K562 (cell line): ENCODE measurements at regions of chr7 and their contacts with region 1.

Region 1: GRCh38 chr7:85023045-85023712 is 163.7 kb downstream of the SEMA3D start:
- DNase-seq: peak; percentile 31 to 61 (median 38)
- ATAC-seq: no peak; the same call in 2 of the 3 replicates
- H3K4me3 ChIP-seq: no peak overlapping the region
- H3K27ac ChIP-seq: no peak overlapping the region
- H3K4me1 ChIP-seq: no peaks in the 10 kb centered on the region
- H3K27me3 ChIP-seq: no peaks in the 10 kb centered on the region
- CTCF ChIP-seq: peak; percentile 37 to 80 (median 57); a peak in 4 of 6 replicates
- EP300 ChIP-seq: no peak
- POLR2A ChIP-seq: no peak
- RAD21 ChIP-seq: peak; percentile 95 to 96

Region 2: DNA sequence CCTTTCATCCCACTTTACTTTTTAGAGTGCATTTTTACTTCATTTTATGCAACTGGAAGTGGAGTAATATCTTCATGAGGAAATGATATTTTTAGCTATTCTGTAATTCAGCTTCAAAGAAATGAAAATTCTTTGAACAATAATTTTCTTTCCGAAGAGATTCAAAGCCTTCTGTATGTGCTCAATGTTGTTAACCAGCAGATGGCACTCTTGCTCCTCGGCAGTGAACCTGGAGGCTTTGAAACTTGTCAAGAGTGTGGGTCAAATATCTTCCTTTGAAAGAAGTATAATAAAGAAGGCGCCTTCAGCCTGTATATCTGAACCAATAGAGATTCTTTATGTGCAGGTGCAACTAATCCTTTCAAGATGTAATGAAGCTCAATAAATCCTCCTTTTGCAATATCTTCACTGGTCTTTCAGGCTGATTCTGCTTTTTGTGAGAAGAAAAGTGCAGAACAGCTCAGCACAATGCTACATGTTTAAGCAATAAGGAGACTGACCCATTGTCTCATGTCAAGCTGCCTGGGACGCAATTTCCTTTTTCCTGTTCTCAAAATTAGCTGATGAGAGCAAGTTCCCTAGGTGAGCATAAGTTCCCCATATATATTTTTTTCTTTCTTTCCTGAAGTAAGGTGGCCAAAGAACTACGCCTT is 1087.0 kb before region 1 on chr7:
- CTCF ChIA-PET with region 1: interaction called, 68 read pairs
- POLR2A ChIA-PET with region 1: no interaction called
- in situ Hi-C with region 1: loop called (anchors 25 kb)
- intact Hi-C with region 1: loop called (anchors 1 kb)
- DNase-seq: peak; percentile 15 to 76 (median 24)
- ATAC-seq: peak; percentile 85
- H3K4me3 ChIP-seq: no peak overlapping the region
- H3K27ac ChIP-seq: no peak overlapping the region
- H3K4me1 ChIP-seq: no peaks in the 10 kb centered on the region
- H3K27me3 ChIP-seq: no peaks in the 10 kb centered on the region
- CTCF ChIP-seq: peak; percentile 73 to 82 (median 73)
- EP300 ChIP-seq: no peak
- POLR2A ChIP-seq: no peak
- RAD21 ChIP-seq: peak; percentile 89 to 90

Region 3: DNA sequence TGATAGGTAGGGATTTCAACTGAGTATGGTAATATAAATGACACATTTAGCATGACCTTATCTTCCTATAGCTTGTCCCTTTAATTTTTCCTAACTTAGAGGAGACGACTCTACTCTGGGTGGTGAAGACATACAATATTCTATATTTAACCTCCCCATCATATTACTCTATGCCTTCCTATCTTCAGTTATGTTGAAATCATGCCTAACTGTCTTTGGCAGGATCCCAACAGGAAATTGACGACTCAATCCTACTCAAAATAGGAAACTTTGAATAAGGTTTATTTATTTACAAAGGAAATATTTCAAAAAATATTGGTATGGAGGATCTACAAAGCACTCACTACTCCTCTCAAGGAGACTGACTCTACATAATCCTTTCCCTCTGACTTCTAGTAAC is 804.5 kb before region 1 on chr7:
- CTCF ChIA-PET with region 1: no interaction called
- POLR2A ChIA-PET with region 1: no interaction called
- in situ Hi-C with region 1: loop called (anchors 25 kb)
- intact Hi-C with region 1: no loop called
- DNase-seq: no peak
- ATAC-seq: no peak
- H3K4me3 ChIP-seq: no peak overlapping the region
- H3K27ac ChIP-seq: no peak overlapping the region
- H3K4me1 ChIP-seq: no peaks in the 10 kb centered on the region
- H3K27me3 ChIP-seq: no peaks in the 10 kb centered on the region
- CTCF ChIP-seq: no peak
- EP300 ChIP-seq: no peak
- POLR2A ChIP-seq: no peak
- RAD21 ChIP-seq: no peak

Region 4: DNA sequence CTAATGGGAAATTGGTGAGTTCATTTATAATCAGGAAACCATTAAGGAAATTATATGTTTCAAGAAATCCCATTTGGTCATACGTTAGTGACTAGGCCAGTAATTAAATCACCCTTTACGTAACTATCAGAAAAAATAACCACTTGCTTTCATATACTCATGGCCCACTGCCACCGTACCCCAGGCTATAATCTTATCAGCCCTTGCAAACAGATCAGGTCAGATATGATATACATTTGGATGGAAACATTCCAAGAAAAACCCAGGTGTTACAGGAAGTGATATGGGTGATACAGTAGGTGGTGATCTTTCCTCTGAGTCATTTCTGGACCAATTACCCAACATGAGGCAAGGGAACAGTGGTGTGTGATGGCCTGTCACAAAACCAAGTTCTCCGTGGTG is 347.5 kb before region 1 on chr7:
- CTCF ChIA-PET with region 1: no interaction called
- POLR2A ChIA-PET with region 1: no interaction called
- in situ Hi-C with region 1: no loop called
- intact Hi-C with region 1: loop called (anchors 5 kb)
- DNase-seq: peak in 3 of 4 experiments; percentile 7 to 50 (median 36)
- ATAC-seq: peak; percentile 83
- H3K4me3 ChIP-seq: no peak overlapping the region
- H3K27ac ChIP-seq: no peak overlapping the region
- H3K4me1 ChIP-seq: peaks cover 0 to 10% of the 10 kb centered on the region in 2 experiments; a peak in 3 of 5 replicates
- H3K27me3 ChIP-seq: no peaks in the 10 kb centered on the region
- CTCF ChIP-seq: no peak
- EP300 ChIP-seq: peak; percentile 59
- POLR2A ChIP-seq: no peak
- RAD21 ChIP-seq: peak in 1 of 2 experiments; percentile 22; a peak in 1 of 4 replicates